Heart left ventricle (tissue), 16 donors: ENCODE measurements at regions of chr10 and their contacts with region 1.

Region 1: DNA sequence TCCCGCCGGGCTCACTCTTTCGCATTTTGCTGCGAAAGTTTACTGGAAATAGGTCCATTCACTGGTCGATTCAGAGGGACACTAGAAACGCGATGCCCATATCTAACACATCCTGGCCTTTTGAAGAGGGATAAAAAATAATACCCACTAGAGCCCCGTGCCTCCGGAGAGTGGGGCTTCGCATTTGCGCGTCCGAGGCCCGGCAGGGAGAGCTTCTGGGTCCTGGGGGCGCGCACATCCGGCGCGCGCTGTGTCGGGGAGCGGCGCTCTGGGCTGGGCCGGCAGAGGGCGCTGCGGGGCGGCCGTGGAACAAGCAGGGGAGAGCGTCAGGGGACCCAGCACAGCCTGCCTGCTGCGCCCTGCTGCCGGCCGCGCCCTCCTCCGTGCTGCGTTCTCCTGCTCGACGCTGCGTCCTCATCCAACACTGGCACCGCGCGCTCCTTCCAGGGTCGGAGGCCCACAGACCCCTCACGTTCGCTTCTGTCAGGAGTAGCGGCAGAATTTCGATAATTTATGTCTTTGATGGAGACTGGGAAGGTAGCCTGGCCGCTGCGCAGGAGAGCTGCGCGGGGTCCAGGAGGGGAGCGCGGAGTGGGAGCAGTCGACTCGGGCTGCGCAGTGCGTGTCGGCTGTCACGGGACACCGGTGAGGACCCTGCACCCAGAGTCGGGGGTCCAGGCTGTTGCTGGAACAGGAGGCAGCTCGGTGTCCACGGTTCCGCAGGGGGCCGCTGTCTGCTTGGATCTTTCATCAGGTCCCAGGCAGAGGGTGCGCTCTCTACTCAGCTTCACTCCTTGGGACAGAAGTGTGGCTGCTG is 41.5 kb upstream of the ZNF32 start:
- DNase-seq: peak; percentile 89 to 95 (median 91)
- ATAC-seq: peak; percentile 94 to 98 (median 97)
- H3K4me3 ChIP-seq: peak overlapping the region; percentile 41 to 68 (median 65)
- H3K27ac ChIP-seq: peak overlapping the region; percentile 85 to 97 (median 90)
- H3K4me1 ChIP-seq: peaks cover 0 to 56% (median 29%) of the 10 kb centered on the region in 12 donors
- H3K27me3 ChIP-seq: no peaks in the 10 kb centered on the region
- CTCF ChIP-seq: peak; percentile 74 to 94 (median 86)
- POLR2A ChIP-seq: peak in 1 of 2 donors; percentile 34

Region 2: DNA sequence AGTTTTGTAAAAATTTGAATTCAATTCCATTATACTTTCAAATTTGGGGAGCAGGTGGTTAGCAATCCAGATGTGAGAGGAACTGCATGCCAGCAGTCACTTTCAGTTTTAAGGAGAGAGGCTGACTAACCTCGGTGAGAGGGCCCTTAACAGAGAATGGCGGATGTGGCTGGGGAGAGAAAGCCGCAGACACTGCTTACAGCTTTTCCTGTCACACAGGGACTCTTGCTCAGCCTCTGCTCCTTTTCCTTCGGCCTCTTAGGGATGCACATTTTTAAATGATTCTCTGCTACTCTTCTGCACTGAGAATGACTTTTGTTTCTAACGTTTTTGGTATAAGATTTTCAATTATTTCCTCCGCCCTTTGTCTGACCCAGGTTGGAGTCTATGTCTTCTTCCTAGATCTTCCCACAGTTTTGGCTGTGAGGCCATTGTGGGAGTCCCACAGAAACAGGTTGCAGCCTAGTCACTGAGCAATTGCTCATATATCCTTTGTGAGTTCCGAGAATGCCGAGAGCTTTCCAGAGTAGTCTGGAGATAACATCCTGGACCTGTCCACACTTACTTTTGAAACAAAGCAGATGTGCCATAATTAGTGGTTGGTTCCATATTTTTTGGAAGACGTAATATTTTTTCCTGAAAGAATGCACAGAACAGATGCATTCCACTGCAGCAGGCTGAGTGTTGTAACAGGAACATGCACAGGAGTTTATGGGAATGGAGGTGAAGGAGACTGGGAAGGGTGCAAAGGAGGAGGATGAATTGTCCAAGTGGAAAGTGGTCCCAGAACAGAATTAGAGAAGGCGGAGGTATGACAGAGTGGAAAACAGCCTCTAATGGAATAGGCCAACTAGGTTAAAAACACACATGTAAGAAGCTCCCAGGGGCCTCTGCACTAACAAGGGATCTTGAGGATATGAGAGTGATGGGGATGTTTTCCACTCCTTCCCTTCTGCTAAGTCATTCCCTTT is 126.5 kb after region 1 on chr10:
- intact Hi-C with region 1: loop called in 2 of 10 experiments (anchors 10 kb)
- DNase-seq: peak in 4 of 5 donors; percentile 55 to 72 (median 68)
- ATAC-seq: peak; percentile 86 to 95 (median 93)
- H3K4me3 ChIP-seq: peak overlapping the region in 1 of 12 donors; percentile 1
- H3K27ac ChIP-seq: peak overlapping the region; percentile 43 to 89 (median 73)
- H3K4me1 ChIP-seq: peaks cover under 1 to 67% (median 33%) of the 10 kb centered on the region in 12 donors
- H3K27me3 ChIP-seq: no peaks in the 10 kb centered on the region
- CTCF ChIP-seq: no peak
- POLR2A ChIP-seq: no peak

Region 3: DNA sequence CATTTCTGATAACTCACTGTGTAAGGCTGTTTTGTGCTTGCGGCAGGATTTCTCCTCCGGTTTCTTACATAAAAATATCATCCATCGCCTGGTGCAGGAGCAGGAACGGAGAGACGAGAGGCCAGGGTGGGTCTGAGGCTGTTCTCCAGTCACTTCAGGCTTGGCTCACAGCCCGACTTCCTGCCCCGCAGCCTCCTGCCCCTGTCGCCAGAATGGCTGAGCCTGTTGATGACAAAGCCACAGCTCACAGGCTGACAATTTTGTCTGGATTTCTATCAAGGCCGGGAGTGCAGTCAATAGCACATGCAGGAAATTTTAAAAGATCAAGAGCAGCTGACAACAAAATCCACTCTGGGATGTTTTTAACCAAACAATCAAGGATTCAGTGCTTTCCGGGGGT is 188.2 kb after region 1 on chr10:
- intact Hi-C with region 1: loop called in 1 of 10 experiments (anchors 10 kb)
- DNase-seq: peak; percentile 77 to 87 (median 83)
- ATAC-seq: peak; percentile 75 to 94 (median 80)
- H3K4me3 ChIP-seq: no peak overlapping the region
- H3K27ac ChIP-seq: peak overlapping the region; percentile 58 to 91 (median 70)
- H3K4me1 ChIP-seq: peaks cover 0 to 52% (median 24%) of the 10 kb centered on the region in 12 donors
- H3K27me3 ChIP-seq: no peaks in the 10 kb centered on the region
- CTCF ChIP-seq: no peak
- POLR2A ChIP-seq: no peak

Region 4: DNA sequence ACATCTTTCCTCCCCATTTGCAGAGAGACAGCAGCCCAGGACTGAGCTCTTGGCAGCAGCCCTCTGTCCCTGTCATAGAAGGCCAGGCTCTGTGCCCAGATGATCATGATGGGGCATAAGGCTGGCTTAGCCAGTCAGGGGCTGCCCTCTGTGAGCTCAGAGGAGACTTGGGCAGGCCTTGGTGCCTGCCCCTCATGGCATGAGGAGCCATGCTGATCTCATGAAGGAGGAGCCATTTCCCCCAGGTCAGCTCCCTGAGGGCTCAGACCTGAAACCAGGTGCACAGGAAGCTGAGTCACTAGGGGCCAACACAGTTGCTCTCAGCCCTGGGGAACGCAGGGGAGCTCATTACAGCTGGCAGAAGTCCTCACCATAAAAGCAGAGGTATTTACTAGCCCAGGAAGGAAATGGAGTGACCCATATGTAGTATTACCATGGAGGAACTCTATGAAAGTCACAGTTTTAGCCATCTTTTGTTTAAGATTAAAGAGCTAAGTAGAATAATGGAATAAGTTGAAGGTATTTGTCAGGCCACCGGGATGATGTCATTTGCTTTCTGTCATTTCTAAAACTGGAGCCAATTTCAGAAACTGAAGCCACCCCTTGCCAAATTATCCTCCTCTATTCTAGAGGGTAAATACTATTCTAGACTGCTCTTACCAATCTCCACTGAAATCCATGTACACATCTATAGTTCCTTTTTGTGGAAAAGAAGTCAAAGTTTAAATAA is 320.9 kb after region 1 on chr10:
- intact Hi-C with region 1: loop called in 2 of 10 experiments (anchors 5 to 10 kb)
- DNase-seq: peak in 3 of 5 donors; percentile 40 to 65 (median 60)
- ATAC-seq: peak; percentile 81 to 91 (median 88)
- H3K4me3 ChIP-seq: no peak overlapping the region
- H3K27ac ChIP-seq: peak overlapping the region in 3 of 12 donors; percentile 28 to 53 (median 31)
- H3K4me1 ChIP-seq: peaks cover 0 to 46% (median 20%) of the 10 kb centered on the region in 12 donors
- H3K27me3 ChIP-seq: no peaks in the 10 kb centered on the region
- CTCF ChIP-seq: no peak
- POLR2A ChIP-seq: no peak

Region 5: GRCh38 chr10:44046605-44047004 is 356.4 kb after region 1 on chr10:
- intact Hi-C with region 1: loop called in 5 of 10 experiments (anchors 10 kb)
- DNase-seq: no peak
- ATAC-seq: no peak
- H3K4me3 ChIP-seq: no peak overlapping the region
- H3K27ac ChIP-seq: peak overlapping the region in 4 of 12 donors; percentile 4 to 69 (median 27)
- H3K4me1 ChIP-seq: peaks cover 0 to 33% (median 8%) of the 10 kb centered on the region in 12 donors
- H3K27me3 ChIP-seq: no peaks in the 10 kb centered on the region
- CTCF ChIP-seq: peak in 3 of 12 donors; percentile 7 to 22 (median 11)
- POLR2A ChIP-seq: no peak

Region 6: GRCh38 chr10:44809652-44810051 is 1119.5 kb after region 1 on chr10:
- intact Hi-C with region 1: loop called in 1 of 10 experiments (anchors 5 kb)
- DNase-seq: no peak
- ATAC-seq: peak in 1 of 4 donors; percentile 31
- H3K4me3 ChIP-seq: no peak overlapping the region
- H3K27ac ChIP-seq: no peak overlapping the region
- H3K4me1 ChIP-seq: peaks cover 0 to 52% (median 23%) of the 10 kb centered on the region in 12 donors
- H3K27me3 ChIP-seq: no peaks in the 10 kb centered on the region
- CTCF ChIP-seq: peak in 4 of 12 donors; percentile 5 to 25 (median 12)
- POLR2A ChIP-seq: no peak